ENCODE measurements at regions of chr22 and their contacts with region 1.

Region 1: DNA sequence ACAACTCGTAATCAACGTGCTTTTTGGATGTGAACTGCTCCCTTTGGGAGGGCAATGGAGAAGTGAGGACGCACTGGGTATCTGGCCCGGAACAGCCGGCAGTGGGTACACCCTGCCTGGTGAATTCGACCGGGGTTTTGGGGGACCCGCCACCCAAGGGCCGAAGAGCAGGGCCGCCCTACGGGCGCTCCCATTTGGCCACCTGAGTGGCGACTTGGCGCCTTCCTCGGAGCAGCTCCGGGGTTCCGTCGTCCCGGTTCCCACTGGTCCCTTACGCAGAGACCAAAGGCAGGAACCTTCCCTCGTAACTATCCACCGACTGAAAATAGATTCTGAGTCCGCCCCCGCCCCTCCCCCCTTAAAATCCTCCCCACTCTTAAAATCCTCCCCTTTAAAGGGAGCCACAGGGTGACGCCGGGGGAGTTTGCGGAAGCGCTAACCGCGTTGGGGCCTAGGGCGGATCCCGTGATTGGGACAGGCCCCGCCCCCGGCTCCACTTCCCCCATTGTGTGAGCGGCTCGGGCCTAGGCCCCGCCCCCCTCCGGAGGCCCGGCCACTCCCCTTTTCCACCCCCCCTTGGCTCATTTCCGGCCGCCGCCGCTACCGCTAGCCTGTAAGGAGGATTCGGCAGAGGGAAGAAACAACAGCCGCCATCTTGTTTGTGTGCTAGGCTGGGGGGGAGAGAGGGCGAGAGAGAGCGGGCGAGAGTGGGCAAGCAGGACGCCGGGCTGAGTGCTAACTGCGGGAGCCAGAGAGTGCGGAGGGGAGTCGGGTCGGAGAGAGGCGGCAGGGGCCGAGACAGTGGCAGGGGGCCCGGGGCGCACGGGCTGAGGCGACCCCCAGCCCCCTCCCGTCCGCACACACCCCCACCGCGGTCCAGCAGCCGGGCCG is 1.0 kb upstream of the EP300 start:
- DNase-seq: peak; percentile 100
- ATAC-seq: peak; percentile 97
- H3K4me3 ChIP-seq: peak overlapping the region; percentile 86
- H3K27ac ChIP-seq: peak overlapping the region; percentile 100
- H3K4me1 ChIP-seq: peaks cover 19% of the 10 kb centered on the region
- H3K27me3 ChIP-seq: no peaks in the 10 kb centered on the region
- CTCF ChIP-seq: no peak

Region 2: DNA sequence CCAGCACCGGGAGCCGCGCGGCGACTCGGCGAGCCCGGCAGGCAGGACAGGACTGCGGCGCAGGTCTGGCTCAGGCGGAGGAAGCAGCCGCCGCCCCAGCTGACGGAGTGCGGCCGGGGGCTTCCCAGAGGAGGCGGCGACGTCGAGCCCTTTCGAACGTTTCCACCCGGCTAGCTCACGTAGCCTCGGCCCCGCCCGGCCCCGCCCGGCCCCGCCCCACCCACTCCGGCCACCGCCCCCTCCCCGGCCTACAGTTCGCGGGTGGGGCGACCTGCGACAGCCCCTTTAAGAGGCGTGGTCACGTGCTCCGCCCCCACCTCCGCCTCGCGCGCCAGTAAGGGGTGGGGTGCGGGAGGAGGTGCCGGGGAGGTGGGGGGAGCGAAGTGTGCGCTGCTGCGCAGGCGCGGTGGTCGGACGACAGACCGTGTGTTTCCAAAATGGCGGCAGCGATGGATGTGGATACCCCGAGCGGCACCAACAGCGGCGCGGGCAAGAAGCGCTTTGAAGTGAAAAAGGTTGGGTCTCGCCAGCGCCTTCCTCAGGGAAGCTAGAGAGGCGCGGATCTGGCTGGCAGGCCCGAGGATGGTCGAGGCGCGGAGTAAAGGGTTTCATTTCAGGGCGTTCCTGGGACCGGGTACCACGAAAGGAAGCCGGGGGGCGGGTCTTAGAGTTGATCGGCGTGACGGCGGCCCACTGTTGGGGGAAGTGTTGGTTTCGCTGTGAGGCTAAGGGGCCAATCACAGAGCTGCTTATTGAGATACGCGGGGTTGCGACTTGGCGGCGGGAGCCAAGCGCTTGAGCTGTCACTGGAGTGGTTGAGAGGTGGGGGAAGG is 140.2 kb before region 1 on chr22 and contains the start of gene RBX1:
- intact Hi-C with region 1: loop called (anchors 5 kb)
- DNase-seq: peak; percentile 99
- ATAC-seq: peak; percentile 97
- H3K4me3 ChIP-seq: peak within 1 kb of the TSS; percentile 58
- H3K27ac ChIP-seq: peak within 1 kb of the TSS; percentile 97
- H3K4me1 ChIP-seq: peaks cover 19% of the 10 kb centered on the region
- H3K27me3 ChIP-seq: no peaks in the 10 kb centered on the region
- CTCF ChIP-seq: no peak
- total RNA-seq, gene RBX1: 45.6 TPM

Measured in upper lobe of right lung (tissue), 1 donor.